CD4-positive, alpha-beta T cell (primary cell): ENCODE measurements at regions of chr5 and their contacts with region 1.

Region 1: DNA sequence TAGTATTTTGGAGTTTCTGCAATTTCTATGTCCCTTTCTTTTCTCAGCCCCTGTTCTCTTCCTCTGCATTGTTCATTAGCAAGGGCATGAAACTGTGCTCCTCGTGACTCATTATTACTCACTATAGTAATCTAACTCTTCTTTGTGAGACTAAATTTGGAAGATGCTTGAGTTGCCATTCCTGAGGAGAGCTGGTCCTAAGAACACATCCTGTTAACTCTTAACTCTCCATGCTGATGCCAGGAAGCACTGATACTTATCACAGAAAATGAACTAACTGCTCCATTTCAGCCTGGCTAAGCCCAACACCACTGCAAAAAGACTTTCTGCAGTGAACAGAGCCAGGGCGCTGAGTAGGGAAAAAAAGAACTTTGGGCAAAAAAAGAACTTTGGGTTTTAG is 10.6 kb upstream of the CSNK1A1 start:
- DNase-seq: peak in 2 of 14 experiments; percentile 5 to 18
- ATAC-seq: no peak
- H3K4me3 ChIP-seq: no peak overlapping the region
- H3K4me3 Mint-ChIP-seq: no peak overlapping the region
- H3K27ac ChIP-seq: no peak overlapping the region
- H3K27ac Mint-ChIP-seq: no peak overlapping the region
- H3K4me1 ChIP-seq: peaks cover 8% of the 10 kb centered on the region
- H3K4me1 Mint-ChIP-seq: peaks cover 25% of the 10 kb centered on the region
- H3K27me3 ChIP-seq: no peaks in the 10 kb centered on the region
- H3K27me3 Mint-ChIP-seq: no peaks in the 10 kb centered on the region
- CTCF ChIP-seq: no peak

Region 2: DNA sequence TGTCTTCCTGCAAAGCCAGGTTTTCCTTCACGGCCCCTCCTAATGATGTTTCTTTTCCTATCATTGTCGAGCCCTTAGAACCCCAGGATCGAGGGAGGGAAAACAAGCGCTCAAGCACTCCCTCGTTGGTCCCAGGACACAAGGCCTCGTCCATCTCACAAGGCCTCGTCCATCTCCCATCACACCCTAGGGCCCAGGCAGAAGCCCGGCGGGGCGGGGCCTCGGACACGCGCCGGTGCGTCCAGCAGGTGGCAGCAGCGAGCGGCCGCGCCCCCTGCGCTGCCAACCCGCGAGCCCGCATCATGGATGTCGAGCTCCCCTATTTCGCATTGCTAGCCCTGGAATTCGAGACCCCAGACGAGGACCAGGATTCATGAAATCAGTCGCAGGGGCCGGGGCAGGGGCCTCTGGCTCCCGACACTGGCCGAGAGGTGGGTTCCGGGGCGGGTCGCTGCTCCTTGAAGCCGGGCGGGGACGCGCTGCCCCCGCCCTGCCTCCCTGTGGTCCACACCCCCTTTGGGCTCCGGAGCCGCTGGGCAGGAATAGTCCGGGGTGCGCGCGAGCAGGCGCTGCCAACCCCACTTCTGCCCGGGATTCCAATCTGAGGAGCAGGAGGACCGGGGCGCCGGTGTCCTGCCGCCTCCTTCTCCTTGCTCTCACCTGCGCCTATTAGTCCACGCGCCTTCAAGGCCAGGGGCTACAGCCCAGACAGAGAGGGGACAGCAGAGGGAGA is 420.5 kb before region 1 on chr5 and contains the start of gene ABLIM3:
- CTCF ChIA-PET with region 1: no interaction called
- POLR2A ChIA-PET with region 1: no interaction called
- intact Hi-C with region 1: loop called (anchors 10 kb)
- DNase-seq: peak; percentile 40 to 82 (median 64)
- ATAC-seq: peak; percentile 94
- H3K4me3 ChIP-seq: peak within 1 kb of the TSS; percentile 52
- H3K4me3 Mint-ChIP-seq: peak within 1 kb of the TSS; percentile 71
- H3K27ac ChIP-seq: no peak within 1 kb of the TSS
- H3K27ac Mint-ChIP-seq: no peak within 1 kb of the TSS
- H3K4me1 ChIP-seq: peaks cover 10% of the 10 kb centered on the region
- H3K4me1 Mint-ChIP-seq: peaks cover 5% of the 10 kb centered on the region
- H3K27me3 ChIP-seq: peaks cover 15 to 26% of the 10 kb centered on the region in 2 experiments
- H3K27me3 Mint-ChIP-seq: peaks cover 31% of the 10 kb centered on the region
- CTCF ChIP-seq: peak; percentile 83
- total RNA-seq, gene ABLIM3: not detected

Region 3: DNA sequence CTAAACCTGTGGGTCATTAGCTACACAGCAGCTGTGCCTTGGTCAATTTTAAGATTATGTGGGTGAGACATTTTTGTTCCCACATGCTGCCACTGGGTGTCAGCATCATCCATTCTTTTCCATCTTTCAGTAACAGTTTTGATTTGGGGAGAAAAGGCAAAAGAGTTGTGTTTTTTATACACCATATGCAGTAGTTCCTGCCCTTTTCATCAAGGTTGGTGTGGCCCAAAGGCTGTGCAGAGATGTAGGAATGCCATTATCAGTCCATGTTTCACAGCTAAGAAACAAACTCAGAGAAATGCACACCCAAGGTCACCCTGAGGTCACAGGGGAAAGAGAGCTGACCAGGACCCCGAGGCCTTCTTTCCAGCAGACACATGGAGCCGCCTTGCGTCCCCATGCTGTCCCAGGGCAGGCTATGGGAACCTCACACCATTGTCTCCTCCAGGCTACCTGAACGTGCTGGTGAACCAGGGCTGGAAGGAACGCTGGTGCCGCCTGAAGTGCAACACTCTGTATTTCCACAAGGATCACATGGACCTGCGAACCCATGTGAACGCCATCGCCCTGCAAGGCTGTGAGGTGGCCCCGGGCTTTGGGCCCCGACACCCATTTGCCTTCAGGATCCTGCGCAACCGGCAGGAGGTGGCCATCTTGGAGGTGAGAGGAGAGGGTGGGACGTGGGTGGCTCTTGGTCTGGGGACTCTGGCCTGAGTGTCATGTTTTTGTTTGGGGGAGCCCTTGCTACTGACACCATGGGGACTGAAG is 244.4 kb before region 1 on chr5:
- CTCF ChIA-PET with region 1: no interaction called
- POLR2A ChIA-PET with region 1: no interaction called
- intact Hi-C with region 1: loop called (anchors 1 to 2 kb)
- DNase-seq: peak in 13 of 14 experiments; percentile 11 to 79 (median 25)
- ATAC-seq: peak; percentile 78
- H3K4me3 ChIP-seq: no peak overlapping the region
- H3K4me3 Mint-ChIP-seq: no peak overlapping the region
- H3K27ac ChIP-seq: no peak overlapping the region
- H3K27ac Mint-ChIP-seq: no peak overlapping the region
- H3K4me1 ChIP-seq: peaks cover 5% of the 10 kb centered on the region
- H3K4me1 Mint-ChIP-seq: peaks cover 6% of the 10 kb centered on the region
- H3K27me3 ChIP-seq: no peaks in the 10 kb centered on the region
- H3K27me3 Mint-ChIP-seq: no peaks in the 10 kb centered on the region
- CTCF ChIP-seq: peak; percentile 89

Region 4: DNA sequence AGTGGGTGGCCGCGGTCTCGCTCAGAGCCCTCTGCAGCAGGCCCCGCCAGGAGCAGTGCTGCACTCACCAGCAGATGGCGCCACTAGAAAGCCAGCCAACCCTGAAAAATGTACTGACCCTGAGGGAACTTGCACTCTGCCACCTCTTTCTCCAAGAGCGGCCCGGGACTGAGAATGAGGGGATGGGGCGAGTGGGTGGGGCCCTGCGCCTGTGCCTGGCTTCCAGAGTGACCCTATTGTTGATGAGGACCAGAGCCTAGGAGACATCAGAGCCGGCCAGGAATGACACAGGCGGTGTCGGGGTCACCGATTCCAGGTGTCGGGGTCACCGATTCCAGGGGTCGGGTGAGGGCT is 179.9 kb before region 1 on chr5:
- CTCF ChIA-PET with region 1: interaction called, 4 read pairs
- POLR2A ChIA-PET with region 1: no interaction called
- intact Hi-C with region 1: loop called (anchors 1 kb)
- DNase-seq: peak; percentile 48 to 82 (median 69)
- ATAC-seq: peak; percentile 85
- H3K4me3 ChIP-seq: no peak overlapping the region
- H3K4me3 Mint-ChIP-seq: no peak overlapping the region
- H3K27ac ChIP-seq: no peak overlapping the region
- H3K27ac Mint-ChIP-seq: no peak overlapping the region
- H3K4me1 ChIP-seq: peaks cover 7% of the 10 kb centered on the region
- H3K4me1 Mint-ChIP-seq: no peaks in the 10 kb centered on the region
- H3K27me3 ChIP-seq: no peaks in the 10 kb centered on the region
- H3K27me3 Mint-ChIP-seq: no peaks in the 10 kb centered on the region
- CTCF ChIP-seq: peak; percentile 86

Region 5: GRCh38 chr5:149434162-149435014 is 127.5 kb before region 1 on chr5:
- CTCF ChIA-PET with region 1: interaction called, 5 read pairs
- POLR2A ChIA-PET with region 1: no interaction called
- intact Hi-C with region 1: loop called in 1 of 2 experiments (anchors 1 kb)
- DNase-seq: peak; percentile 9 to 72 (median 39)
- ATAC-seq: peak; percentile 74
- H3K4me3 ChIP-seq: no peak overlapping the region
- H3K4me3 Mint-ChIP-seq: no peak overlapping the region
- H3K27ac ChIP-seq: no peak overlapping the region
- H3K27ac Mint-ChIP-seq: no peak overlapping the region
- H3K4me1 ChIP-seq: peaks cover 9% of the 10 kb centered on the region
- H3K4me1 Mint-ChIP-seq: peaks cover 7% of the 10 kb centered on the region
- H3K27me3 ChIP-seq: no peaks in the 10 kb centered on the region
- H3K27me3 Mint-ChIP-seq: no peaks in the 10 kb centered on the region
- CTCF ChIP-seq: peak; percentile 93

Region 6: GRCh38 chr5:149442563-149443182 is 119.2 kb before region 1 on chr5:
- CTCF ChIA-PET with region 1: interaction called, 6 read pairs
- POLR2A ChIA-PET with region 1: interaction called, 3 read pairs
- intact Hi-C with region 1: loop called (anchors 1 kb)
- DNase-seq: peak; percentile 40 to 81 (median 64)
- ATAC-seq: peak; percentile 83
- H3K4me3 ChIP-seq: no peak overlapping the region
- H3K4me3 Mint-ChIP-seq: no peak overlapping the region
- H3K27ac ChIP-seq: no peak overlapping the region
- H3K27ac Mint-ChIP-seq: no peak overlapping the region
- H3K4me1 ChIP-seq: peaks cover 12% of the 10 kb centered on the region
- H3K4me1 Mint-ChIP-seq: peaks cover 17% of the 10 kb centered on the region
- H3K27me3 ChIP-seq: no peaks in the 10 kb centered on the region
- H3K27me3 Mint-ChIP-seq: no peaks in the 10 kb centered on the region
- CTCF ChIP-seq: peak; percentile 90

Region 7: GRCh38 chr5:149960272-149961185 is 398.7 kb after region 1 on chr5 and contains the start of gene SLC26A2:
- CTCF ChIA-PET with region 1: no interaction called
- POLR2A ChIA-PET with region 1: no interaction called
- intact Hi-C with region 1: no loop called
- DNase-seq: peak; percentile 85 to 97 (median 90)
- ATAC-seq: peak; percentile 97
- H3K4me3 ChIP-seq: peak within 1 kb of the TSS; percentile 98
- H3K4me3 Mint-ChIP-seq: peak within 1 kb of the TSS; percentile 93
- H3K27ac ChIP-seq: peak within 1 kb of the TSS; percentile 67 to 87
- H3K27ac Mint-ChIP-seq: peak within 1 kb of the TSS; percentile 93
- H3K4me1 ChIP-seq: peaks cover 28% of the 10 kb centered on the region
- H3K4me1 Mint-ChIP-seq: peaks cover 32% of the 10 kb centered on the region
- H3K27me3 ChIP-seq: no peaks in the 10 kb centered on the region
- H3K27me3 Mint-ChIP-seq: no peaks in the 10 kb centered on the region
- CTCF ChIP-seq: no peak
- total RNA-seq, gene SLC26A2: 2.8 to 4.2 TPM